PC-3 (cell line): ENCODE measurements at regions of chr12 and their contacts with region 1.

Region 1: GRCh38 chr12:32062881-32063280 is 43.8 kb upstream of the BICD1 start:
- DNase-seq: no peak
- ATAC-seq: no peak
- H3K4me3 ChIP-seq: no peak overlapping the region
- H3K27ac ChIP-seq: no peak overlapping the region
- H3K4me1 ChIP-seq: no peaks in the 10 kb centered on the region
- H3K27me3 ChIP-seq: no peaks in the 10 kb centered on the region
- CTCF ChIP-seq: no peak

Region 2: GRCh38 chr12:31682136-31682962 is 380.5 kb before region 1 on chr12:
- CTCF ChIA-PET with region 1: no interaction called
- POLR2A ChIA-PET with region 1: no interaction called
- intact Hi-C with region 1: loop called (anchors 1 kb)
- DNase-seq: peak; percentile 80
- ATAC-seq: peak; percentile 66
- H3K4me3 ChIP-seq: no peak overlapping the region
- H3K27ac ChIP-seq: no peak overlapping the region
- H3K4me1 ChIP-seq: no peaks in the 10 kb centered on the region
- H3K27me3 ChIP-seq: no peaks in the 10 kb centered on the region
- CTCF ChIP-seq: peak; percentile 75

Region 3: DNA sequence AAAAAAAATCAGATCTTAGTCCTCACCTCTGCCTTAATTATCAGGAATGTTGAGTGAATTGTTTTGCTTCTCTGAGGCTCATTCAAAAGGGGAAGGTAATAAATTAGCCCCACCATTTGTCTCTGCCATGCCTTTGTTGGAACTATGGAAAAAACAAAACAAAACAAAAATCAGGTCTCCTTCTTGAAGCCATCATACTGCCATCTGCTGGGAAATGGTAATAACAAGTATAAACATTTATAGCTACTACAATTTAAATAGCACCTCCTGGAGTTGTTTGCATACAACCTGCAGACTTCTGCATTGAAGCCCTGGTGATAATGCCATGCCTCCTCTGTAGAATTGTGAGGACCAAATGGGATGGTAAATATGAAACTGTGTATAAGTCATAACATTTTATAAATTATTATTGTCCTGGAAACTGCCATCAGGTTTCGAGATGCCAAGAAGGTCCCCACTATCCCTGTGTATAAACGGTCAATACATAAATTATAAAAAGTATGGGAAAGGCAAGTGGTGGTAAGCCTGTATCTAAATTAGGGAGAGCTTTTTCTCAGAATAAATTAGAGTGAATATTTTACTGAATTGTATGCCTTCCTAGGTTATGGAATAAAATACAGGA is 249.3 kb after region 1 on chr12:
- CTCF ChIA-PET with region 1: interaction called, 8 read pairs
- POLR2A ChIA-PET with region 1: no interaction called
- intact Hi-C with region 1: loop called (anchors 1 kb)
- DNase-seq: peak; percentile 68
- ATAC-seq: peak; percentile 51
- H3K4me3 ChIP-seq: no peak overlapping the region
- H3K27ac ChIP-seq: no peak overlapping the region
- H3K4me1 ChIP-seq: no peaks in the 10 kb centered on the region
- H3K27me3 ChIP-seq: no peaks in the 10 kb centered on the region
- CTCF ChIP-seq: peak; percentile 79